B cell (primary cell): ENCODE measurements at regions of chr22 and their contacts with region 1.

Region 1: GRCh38 chr22:25540166-25540907 is 24.1 kb upstream of the GRK3 start:
- DNase-seq: no peak
- ATAC-seq: no peak
- H3K4me3 ChIP-seq: no peak overlapping the region
- H3K4me3 Mint-ChIP-seq: no peak overlapping the region
- H3K27ac ChIP-seq: no peak overlapping the region
- H3K27ac Mint-ChIP-seq: no peak overlapping the region
- H3K4me1 ChIP-seq: peaks cover 8 to 10% of the 10 kb centered on the region in 2 donors
- H3K4me1 Mint-ChIP-seq: peaks cover 14% of the 10 kb centered on the region
- H3K27me3 ChIP-seq: no peaks in the 10 kb centered on the region
- H3K27me3 Mint-ChIP-seq: no peaks in the 10 kb centered on the region
- CTCF ChIP-seq: no peak

Region 2: DNA sequence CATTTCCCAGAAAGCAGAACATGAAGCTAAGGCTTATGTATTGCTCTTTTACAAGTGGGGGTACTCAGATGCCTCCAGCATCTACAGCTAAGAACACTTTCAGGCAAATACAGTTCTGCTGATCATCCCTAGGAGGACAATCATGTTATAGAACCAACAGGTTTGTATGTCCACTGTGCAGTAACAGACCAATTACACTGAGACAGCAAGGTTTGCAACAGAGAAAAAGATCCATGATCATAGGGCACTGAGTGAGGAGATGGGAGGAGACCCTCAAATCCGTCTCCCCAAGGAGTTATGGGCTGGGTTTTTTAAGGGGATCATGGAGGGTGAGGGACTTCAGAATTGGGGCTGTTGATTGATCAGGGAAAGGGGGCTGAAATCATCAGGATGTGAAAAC is 15.0 kb before region 1 on chr22:
- CTCF ChIA-PET with region 1: no interaction called
- POLR2A ChIA-PET with region 1: no interaction called
- intact Hi-C with region 1: no loop called
- DNase-seq: no peak
- ATAC-seq: no peak
- H3K4me3 ChIP-seq: no peak overlapping the region
- H3K4me3 Mint-ChIP-seq: no peak overlapping the region
- H3K27ac ChIP-seq: no peak overlapping the region
- H3K27ac Mint-ChIP-seq: no peak overlapping the region
- H3K4me1 ChIP-seq: no peaks in the 10 kb centered on the region
- H3K4me1 Mint-ChIP-seq: no peaks in the 10 kb centered on the region
- H3K27me3 ChIP-seq: no peaks in the 10 kb centered on the region
- H3K27me3 Mint-ChIP-seq: no peaks in the 10 kb centered on the region
- CTCF ChIP-seq: no peak

Region 3: GRCh38 chr22:25572708-25573171 is 32.4 kb after region 1 on chr22:
- CTCF ChIA-PET with region 1: interaction called, 17 read pairs
- POLR2A ChIA-PET with region 1: no interaction called
- intact Hi-C with region 1: no loop called
- DNase-seq: no peak
- ATAC-seq: peak; percentile 31
- H3K4me3 ChIP-seq: no peak overlapping the region
- H3K4me3 Mint-ChIP-seq: peak overlapping the region; percentile 42
- H3K27ac ChIP-seq: peak overlapping the region in 1 of 2 donors; percentile 1
- H3K27ac Mint-ChIP-seq: peak overlapping the region; percentile 28
- H3K4me1 ChIP-seq: peaks cover 40 to 42% of the 10 kb centered on the region in 2 donors
- H3K4me1 Mint-ChIP-seq: peaks cover 74% of the 10 kb centered on the region
- H3K27me3 ChIP-seq: no peaks in the 10 kb centered on the region
- H3K27me3 Mint-ChIP-seq: no peaks in the 10 kb centered on the region
- CTCF ChIP-seq: no peak

Region 4: GRCh38 chr22:25650833-25651232 is 110.5 kb after region 1 on chr22:
- CTCF ChIA-PET with region 1: interaction called, 13 read pairs
- POLR2A ChIA-PET with region 1: no interaction called
- intact Hi-C with region 1: loop called (anchors 2 kb)
- DNase-seq: peak; percentile 59
- ATAC-seq: peak; percentile 85
- H3K4me3 ChIP-seq: peak overlapping the region in 1 of 5 experiments; percentile 18
- H3K4me3 Mint-ChIP-seq: peak overlapping the region; percentile 71
- H3K27ac ChIP-seq: peak overlapping the region; percentile 53 to 68
- H3K27ac Mint-ChIP-seq: peak overlapping the region; percentile 81
- H3K4me1 ChIP-seq: peaks cover 21 to 27% of the 10 kb centered on the region in 2 donors
- H3K4me1 Mint-ChIP-seq: peaks cover 65% of the 10 kb centered on the region
- H3K27me3 ChIP-seq: no peaks in the 10 kb centered on the region
- H3K27me3 Mint-ChIP-seq: no peaks in the 10 kb centered on the region
- CTCF ChIP-seq: no peak

Region 5: GRCh38 chr22:25708355-25708754 is 168.0 kb after region 1 on chr22:
- CTCF ChIA-PET with region 1: interaction called, 104 read pairs
- POLR2A ChIA-PET with region 1: no interaction called
- intact Hi-C with region 1: no loop called
- DNase-seq: no peak
- ATAC-seq: no peak
- H3K4me3 ChIP-seq: no peak overlapping the region
- H3K4me3 Mint-ChIP-seq: no peak overlapping the region
- H3K27ac ChIP-seq: no peak overlapping the region
- H3K27ac Mint-ChIP-seq: peak overlapping the region; percentile 20
- H3K4me1 ChIP-seq: no peaks in the 10 kb centered on the region
- H3K4me1 Mint-ChIP-seq: peaks cover 2% of the 10 kb centered on the region
- H3K27me3 ChIP-seq: no peaks in the 10 kb centered on the region
- H3K27me3 Mint-ChIP-seq: no peaks in the 10 kb centered on the region
- CTCF ChIP-seq: no peak